ENCODE measurements at regions of chr1 and their contacts with region 1.

Region 1: DNA sequence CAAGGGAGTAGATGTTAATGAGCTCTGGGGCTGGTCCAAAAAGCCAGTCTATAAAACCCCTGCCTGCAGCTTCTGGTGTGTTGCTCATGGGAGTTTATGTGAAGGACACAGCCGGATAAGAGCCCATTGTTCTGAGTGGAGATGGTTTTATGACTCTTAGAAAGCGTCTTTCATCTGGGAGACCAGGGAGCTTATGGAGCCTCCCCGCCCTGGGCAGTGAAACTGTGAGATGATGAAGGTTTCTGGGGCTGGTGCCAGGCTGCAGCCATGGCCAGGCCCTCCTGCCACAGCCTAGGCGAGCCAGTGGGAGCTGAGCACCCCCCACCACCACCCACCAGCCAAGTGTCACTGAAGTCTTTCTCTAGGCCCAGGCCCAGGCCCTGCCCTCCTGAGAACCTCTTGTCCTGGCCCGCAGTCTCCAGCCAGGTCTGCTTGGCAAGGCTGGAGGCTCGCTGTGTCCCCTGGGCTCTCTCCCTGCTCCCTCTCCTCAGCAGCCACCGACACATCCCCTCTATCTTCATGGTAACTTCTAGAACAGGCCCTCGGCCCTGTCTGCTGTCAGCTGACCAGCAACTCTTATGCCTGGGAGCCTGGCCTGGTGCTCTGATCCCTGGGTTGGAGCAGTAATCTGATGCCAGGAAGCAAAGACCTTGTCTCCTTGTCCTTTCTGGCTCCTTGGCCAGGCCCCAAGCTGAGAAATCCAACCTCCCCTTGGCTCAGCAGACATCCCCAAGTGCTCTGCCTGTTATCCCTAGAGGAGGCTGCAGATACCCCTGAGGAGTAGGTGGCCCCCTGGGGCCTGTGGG is 7.6 kb upstream of the ARHGEF10L start:
- DNase-seq: no peak
- H3K4me3 ChIP-seq: no peak overlapping the region
- H3K27ac ChIP-seq: peak overlapping the region; percentile 91 to 98 (median 97)
- H3K4me1 ChIP-seq: peaks cover 23 to 92% (median 86%) of the 10 kb centered on the region in 4 donors
- H3K27me3 ChIP-seq: no peaks in the 10 kb centered on the region
- CTCF ChIP-seq: no peak
- EP300 ChIP-seq: no peak
- POLR2A ChIP-seq: no peak

Region 2: GRCh38 chr1:17587989-17588685 is 56.3 kb after region 1 on chr1:
- intact Hi-C with region 1: loop called (anchors 5 kb)
- DNase-seq: no peak
- H3K4me3 ChIP-seq: no peak overlapping the region
- H3K27ac ChIP-seq: peak overlapping the region; percentile 82 to 88 (median 85)
- H3K4me1 ChIP-seq: peaks cover 53 to 73% (median 66%) of the 10 kb centered on the region in 4 donors
- H3K27me3 ChIP-seq: no peaks in the 10 kb centered on the region
- CTCF ChIP-seq: no peak
- EP300 ChIP-seq: no peak
- POLR2A ChIP-seq: no peak

Measured in esophagus muscularis mucosa (tissue), 4 donors.